GM13977 (cell line): ENCODE measurements at regions of chr20 and their contacts with region 1.

Region 1: DNA sequence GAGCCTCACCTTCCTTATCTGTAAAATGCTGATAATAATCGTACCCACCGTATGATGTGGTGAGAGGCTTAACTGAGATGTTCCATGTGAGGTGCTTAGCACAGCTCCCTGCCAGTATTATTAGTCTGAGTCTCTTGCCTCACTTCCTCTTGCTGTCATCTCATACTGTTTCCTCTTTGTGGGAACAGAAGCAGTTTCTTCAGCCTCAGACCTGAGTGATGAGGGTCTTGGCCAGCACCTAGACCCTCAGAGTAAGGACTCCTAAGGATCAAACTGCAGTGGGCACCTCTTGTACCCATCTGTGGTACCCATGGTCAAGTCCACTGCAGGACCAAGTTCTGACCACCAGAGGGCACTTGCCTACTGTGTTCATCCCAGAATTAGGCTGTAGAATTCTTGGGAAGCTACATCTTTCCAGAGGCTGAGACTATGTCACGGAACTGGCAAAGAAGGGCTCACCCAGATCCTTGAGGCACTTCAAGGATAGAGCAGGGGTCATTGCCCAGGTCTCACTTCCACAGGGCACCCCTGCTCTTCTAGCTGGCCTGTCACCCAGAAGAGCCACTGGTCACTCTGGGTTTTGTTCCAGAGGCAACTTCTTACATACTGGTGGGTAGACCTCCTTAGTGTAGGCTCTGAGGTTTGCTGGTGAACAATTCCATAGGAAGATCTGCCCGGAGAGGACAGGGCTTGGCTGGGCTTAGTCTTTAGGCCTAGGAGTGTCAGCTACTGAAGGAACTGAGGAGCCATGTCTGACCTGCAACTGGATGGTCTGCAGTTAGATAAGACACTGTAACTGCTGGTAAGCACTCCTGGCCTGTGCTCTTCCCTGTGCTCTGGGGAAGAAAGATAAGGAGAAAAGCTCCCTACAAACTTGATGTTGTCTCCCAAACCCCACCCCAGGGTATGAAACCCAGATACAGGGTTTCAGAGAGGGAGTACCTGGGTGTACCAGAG is 20.6 kb upstream of the SGK2 start:
- DNase-seq: peak; percentile 50
- CTCF ChIP-seq: peak; percentile 80

Region 2: GRCh38 chr20:43691928-43692524 is 153.8 kb after region 1 on chr20:
- in situ Hi-C with region 1: loop called (anchors 10 kb)
- DNase-seq: peak; percentile 76
- CTCF ChIP-seq: peak; percentile 84

Region 3: DNA sequence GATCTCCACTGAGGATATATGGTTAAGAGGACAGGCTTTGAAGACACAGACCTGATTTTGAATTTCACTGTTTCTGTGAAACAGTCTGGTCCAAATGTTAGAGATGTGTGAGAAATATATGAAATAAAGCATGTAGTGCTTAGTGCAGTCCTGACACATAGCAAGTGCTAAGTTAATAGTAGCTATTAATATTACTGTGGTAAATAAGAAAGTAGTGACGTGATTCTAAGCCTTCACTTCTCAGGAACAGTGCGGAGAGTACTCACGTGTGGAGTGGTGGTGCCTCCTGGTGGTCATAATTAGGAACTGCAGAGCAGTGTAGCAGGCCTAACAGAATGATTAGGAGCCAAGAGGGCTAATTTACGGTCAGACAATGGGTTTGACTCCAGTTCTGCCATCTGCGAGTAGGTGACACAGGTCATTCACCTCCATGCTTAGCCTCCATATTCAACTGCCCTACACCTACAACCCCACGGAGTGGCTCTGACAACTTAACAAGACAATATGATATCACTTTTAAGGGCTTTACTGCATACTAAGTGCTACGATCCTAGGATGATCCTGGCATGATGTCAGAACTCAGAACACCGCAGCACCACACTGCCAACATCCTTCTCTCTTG is 542.6 kb after region 1 on chr20:
- in situ Hi-C with region 1: loop called (anchors 25 kb)
- DNase-seq: peak; percentile 88
- CTCF ChIP-seq: peak; percentile 98

Region 4: DNA sequence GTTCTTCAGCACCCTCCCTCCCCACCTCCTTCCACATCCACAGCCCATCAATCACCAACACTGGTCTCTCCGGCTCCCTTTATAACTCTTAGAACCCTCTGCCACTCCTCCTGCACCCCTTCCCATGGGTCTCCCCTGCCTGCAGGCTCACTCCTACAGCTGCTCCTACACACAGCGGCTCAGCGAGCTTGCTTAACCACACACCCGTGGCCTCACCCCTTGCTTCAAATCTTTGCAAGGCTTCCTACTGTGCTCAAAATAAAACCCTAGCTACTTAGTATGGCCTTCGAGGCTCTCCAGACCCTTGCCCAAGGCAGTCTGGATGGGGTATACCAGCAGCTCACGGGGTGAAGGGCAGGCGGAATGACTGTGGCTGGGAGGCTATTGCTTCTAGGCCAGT is 585.1 kb after region 1 on chr20:
- in situ Hi-C with region 1: no loop called
- DNase-seq: no peak
- CTCF ChIP-seq: no peak